MCF 10A (cell line): ENCODE measurements at regions of chr3 and their contacts with region 1.

Region 1: GRCh38 chr3:66138336-66139313 is 82.2 kb upstream of the SLC25A26 start:
- DNase-seq: peak; percentile 77
- H3K4me3 Mint-ChIP-seq: no peak overlapping the region
- H3K27ac Mint-ChIP-seq: no peak overlapping the region
- H3K4me1 Mint-ChIP-seq: no peaks in the 10 kb centered on the region
- H3K27me3 Mint-ChIP-seq: peaks cover 15% of the 10 kb centered on the region
- CTCF ChIP-seq: peak; percentile 74

Region 2: GRCh38 chr3:65793495-65794199 is 345.0 kb before region 1 on chr3:
- CTCF ChIA-PET with region 1: interaction called, 27 read pairs
- POLR2A ChIA-PET with region 1: no interaction called
- intact Hi-C with region 1: no loop called
- DNase-seq: no peak
- H3K4me3 Mint-ChIP-seq: no peak overlapping the region
- H3K27ac Mint-ChIP-seq: no peak overlapping the region
- H3K4me1 Mint-ChIP-seq: peaks cover 9% of the 10 kb centered on the region
- H3K27me3 Mint-ChIP-seq: no peaks in the 10 kb centered on the region
- CTCF ChIP-seq: no peak

Region 3: GRCh38 chr3:65974509-65974908 is 164.1 kb before region 1 on chr3:
- CTCF ChIA-PET with region 1: no interaction called
- POLR2A ChIA-PET with region 1: no interaction called
- intact Hi-C with region 1: loop called (anchors 1 kb)
- DNase-seq: peak; percentile 18
- H3K4me3 Mint-ChIP-seq: no peak overlapping the region
- H3K27ac Mint-ChIP-seq: no peak overlapping the region
- H3K4me1 Mint-ChIP-seq: no peaks in the 10 kb centered on the region
- H3K27me3 Mint-ChIP-seq: no peaks in the 10 kb centered on the region
- CTCF ChIP-seq: no peak

Region 4: DNA sequence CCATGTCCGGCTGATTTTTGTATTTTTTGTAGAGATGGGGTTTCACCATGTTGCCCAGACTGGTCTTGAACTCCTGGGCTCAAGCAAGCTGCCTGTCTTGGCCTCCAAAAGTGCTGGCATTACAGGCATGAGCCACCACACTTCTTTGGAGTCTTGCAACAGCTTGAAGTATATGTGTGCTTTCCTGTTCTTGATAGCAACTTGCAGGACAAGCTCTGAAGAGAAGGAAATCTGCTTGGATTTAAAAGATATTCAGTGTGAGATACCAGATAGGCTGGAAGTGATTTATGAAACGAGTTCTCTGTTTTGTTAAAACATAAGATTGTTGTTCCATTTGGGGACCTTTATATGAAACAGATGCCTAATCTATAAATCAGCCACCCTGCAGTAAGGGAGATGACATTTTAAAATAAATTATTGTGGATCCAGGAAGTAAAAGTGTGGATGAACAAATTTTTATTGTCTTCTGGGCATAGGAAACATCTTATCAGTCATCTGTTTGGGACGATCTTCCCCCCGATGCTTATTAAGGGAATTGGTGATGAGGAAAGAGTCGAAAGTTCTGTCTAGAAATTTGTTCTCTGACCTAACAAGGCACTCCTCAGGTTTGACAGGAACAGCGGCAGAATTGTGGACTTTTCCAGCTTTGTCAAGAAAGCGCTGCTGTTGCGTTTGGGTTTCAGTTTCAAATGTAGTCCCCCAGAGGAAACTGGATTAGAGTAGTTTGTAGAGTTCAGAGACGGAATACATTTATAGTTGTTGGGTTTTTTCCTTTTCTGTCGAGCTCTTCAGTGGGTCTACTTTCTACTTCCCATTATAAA is 46.2 kb before region 1 on chr3:
- CTCF ChIA-PET with region 1: interaction called, 10 read pairs
- POLR2A ChIA-PET with region 1: interaction called, 4 read pairs
- intact Hi-C with region 1: no loop called
- DNase-seq: no peak
- H3K4me3 Mint-ChIP-seq: no peak overlapping the region
- H3K27ac Mint-ChIP-seq: no peak overlapping the region
- H3K4me1 Mint-ChIP-seq: no peaks in the 10 kb centered on the region
- H3K27me3 Mint-ChIP-seq: no peaks in the 10 kb centered on the region
- CTCF ChIP-seq: no peak

Region 5: GRCh38 chr3:66153481-66154443 is 15.1 kb after region 1 on chr3:
- CTCF ChIA-PET with region 1: interaction called, 14 read pairs
- POLR2A ChIA-PET with region 1: no interaction called
- intact Hi-C with region 1: no loop called
- DNase-seq: no peak
- H3K4me3 Mint-ChIP-seq: no peak overlapping the region
- H3K27ac Mint-ChIP-seq: no peak overlapping the region
- H3K4me1 Mint-ChIP-seq: no peaks in the 10 kb centered on the region
- H3K27me3 Mint-ChIP-seq: peaks cover 12% of the 10 kb centered on the region
- CTCF ChIP-seq: no peak